ENCODE measurements at regions of chr15 and their contacts with region 1.

Region 1: DNA sequence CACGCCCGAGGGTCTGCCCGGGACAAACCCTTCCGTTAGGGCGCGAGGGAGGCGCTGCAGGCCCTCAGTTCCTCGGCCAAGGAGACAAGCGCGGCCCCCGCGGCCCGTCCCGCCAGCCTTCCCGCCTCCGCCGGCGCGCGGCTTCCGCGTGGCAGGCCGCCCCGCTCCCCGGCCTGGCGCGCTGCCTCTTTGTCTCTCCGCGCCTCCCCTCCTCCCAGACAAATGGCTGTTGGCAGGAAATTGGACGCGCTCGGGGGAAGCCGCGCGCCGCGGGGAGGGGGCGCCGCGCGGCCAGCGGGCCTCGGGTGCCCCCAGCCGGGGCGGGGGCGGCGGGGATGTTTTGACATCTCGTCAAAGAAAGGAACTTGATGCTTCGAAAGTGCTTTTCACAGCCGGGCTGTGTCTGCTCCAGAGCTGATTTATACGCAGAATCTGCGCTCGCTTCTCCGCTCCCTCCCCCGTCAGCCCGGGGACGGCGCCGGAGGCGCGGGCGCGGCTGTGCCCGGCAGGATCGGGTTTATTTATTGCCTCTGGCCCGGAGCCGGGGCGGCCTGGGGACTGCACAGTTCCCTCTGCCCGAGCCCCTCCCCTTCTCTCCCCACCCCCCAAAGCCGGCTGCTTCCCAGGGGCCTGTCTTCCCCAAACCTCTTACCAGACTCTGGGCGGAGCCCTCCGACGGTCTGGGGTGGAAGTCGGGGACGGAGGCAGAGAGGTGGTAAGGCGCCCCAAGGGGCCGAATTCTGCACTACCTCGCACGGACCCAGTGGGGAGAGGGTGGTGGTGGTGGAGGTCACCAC is 20.7 kb downstream of the SHF start:
- DNase-seq: peak; percentile 58 to 82 (median 78)
- ATAC-seq: peak; percentile 95
- H3K4me3 ChIP-seq: peak overlapping the region; percentile 70
- H3K4me3 Mint-ChIP-seq: peak overlapping the region; percentile 62 to 86 (median 74)
- H3K27ac ChIP-seq: peak overlapping the region; percentile 95
- H3K27ac Mint-ChIP-seq: peak overlapping the region; percentile 62 to 92 (median 83)
- H3K4me1 ChIP-seq: peaks cover 10 to 13% of the 10 kb centered on the region in 2 donors
- H3K4me1 Mint-ChIP-seq: peaks cover 0 to 31% (median 18%) of the 10 kb centered on the region in 7 donors
- H3K27me3 ChIP-seq: no peaks in the 10 kb centered on the region
- H3K27me3 Mint-ChIP-seq: no peaks in the 10 kb centered on the region

Region 2: DNA sequence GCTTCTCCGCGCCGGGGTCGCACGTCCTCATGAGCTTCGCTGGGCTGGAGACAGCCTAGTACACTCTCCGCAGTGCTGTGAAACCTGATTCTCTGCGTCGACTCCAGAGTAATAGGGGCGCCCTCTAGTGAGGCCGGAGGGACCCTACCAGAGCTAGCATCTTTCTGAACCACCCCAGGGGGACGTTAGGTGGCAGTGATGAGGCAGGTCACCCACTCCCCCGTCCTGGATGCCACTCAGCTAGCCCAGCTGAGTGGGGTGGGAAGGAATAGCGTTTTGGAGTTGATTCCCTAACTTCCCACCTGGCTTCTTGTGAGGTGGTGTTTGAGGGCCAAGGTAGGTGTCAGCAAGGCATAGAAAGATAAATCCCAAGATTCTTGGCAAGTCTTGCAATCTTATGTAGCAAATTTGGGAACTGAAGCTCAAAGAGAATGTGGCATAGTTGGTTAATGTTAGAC is 48.9 kb before region 1 on chr15:
- CTCF ChIA-PET with region 1: interaction called, 6 read pairs
- POLR2A ChIA-PET with region 1: interaction called, 3 read pairs
- intact Hi-C with region 1: loop called in 1 of 2 experiments (anchors 1 kb)
- DNase-seq: peak; percentile 64 to 86 (median 81)
- ATAC-seq: peak; percentile 99
- H3K4me3 ChIP-seq: peak overlapping the region; percentile 34
- H3K4me3 Mint-ChIP-seq: peak overlapping the region; percentile 69 to 91 (median 82)
- H3K27ac ChIP-seq: no peak overlapping the region
- H3K27ac Mint-ChIP-seq: peak overlapping the region in 1 of 9 donors; percentile 47
- H3K4me1 ChIP-seq: peaks cover 0 to 35% of the 10 kb centered on the region in 2 donors
- H3K4me1 Mint-ChIP-seq: peaks cover 19 to 42% (median 33%) of the 10 kb centered on the region in 7 donors
- H3K27me3 ChIP-seq: peaks cover 4 to 27% of the 10 kb centered on the region in 2 donors
- H3K27me3 Mint-ChIP-seq: peaks cover 50 to 82% (median 65%) of the 10 kb centered on the region in 5 donors

Region 3: GRCh38 chr15:45179221-45179985 is 12.4 kb after region 1 on chr15:
- CTCF ChIA-PET with region 1: interaction called, 15 read pairs
- POLR2A ChIA-PET with region 1: interaction called, 11 read pairs
- intact Hi-C with region 1: no loop called
- DNase-seq: peak in 6 of 9 donors; percentile 41 to 57 (median 50)
- ATAC-seq: no peak
- H3K4me3 ChIP-seq: no peak overlapping the region
- H3K4me3 Mint-ChIP-seq: no peak overlapping the region
- H3K27ac ChIP-seq: no peak overlapping the region
- H3K27ac Mint-ChIP-seq: peak overlapping the region in 1 of 9 donors; percentile 69
- H3K4me1 ChIP-seq: peaks cover 0 to 8% of the 10 kb centered on the region in 2 donors
- H3K4me1 Mint-ChIP-seq: peaks cover 0 to 18% (median 10%) of the 10 kb centered on the region in 7 donors
- H3K27me3 ChIP-seq: no peaks in the 10 kb centered on the region
- H3K27me3 Mint-ChIP-seq: no peaks in the 10 kb centered on the region

Region 4: DNA sequence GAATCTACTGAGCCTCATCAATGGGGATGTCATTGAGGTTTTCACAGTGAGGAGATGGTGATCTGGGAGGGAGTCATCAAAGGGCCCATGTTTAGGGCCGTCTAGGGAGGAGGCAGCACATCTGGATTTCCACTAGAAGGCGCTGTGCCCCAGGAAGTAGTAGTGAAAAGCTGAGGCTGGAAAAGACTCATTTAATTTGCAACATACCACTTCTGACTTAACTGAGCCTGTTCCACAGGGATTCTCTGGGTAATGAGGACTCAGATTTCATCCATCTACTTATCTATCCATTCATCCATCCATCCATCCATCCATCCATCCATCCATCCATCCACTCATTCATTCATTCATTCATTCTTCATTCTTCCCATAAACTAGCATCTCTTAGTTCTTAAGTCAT is 38.2 kb after region 1 on chr15:
- CTCF ChIA-PET with region 1: interaction called, 15 read pairs
- POLR2A ChIA-PET with region 1: interaction called, 77 read pairs
- intact Hi-C with region 1: loop called in 1 of 2 experiments (anchors 1 kb)
- DNase-seq: peak in 8 of 9 donors; percentile 31 to 61 (median 46)
- ATAC-seq: peak; percentile 27
- H3K4me3 ChIP-seq: no peak overlapping the region
- H3K4me3 Mint-ChIP-seq: no peak overlapping the region
- H3K27ac ChIP-seq: no peak overlapping the region
- H3K27ac Mint-ChIP-seq: peak overlapping the region in 3 of 9 donors; percentile 12 to 28 (median 19)
- H3K4me1 ChIP-seq: peaks cover 5% of the 10 kb centered on the region in 2 donors
- H3K4me1 Mint-ChIP-seq: peaks cover 0 to 8% (median 4%) of the 10 kb centered on the region in 7 donors
- H3K27me3 ChIP-seq: no peaks in the 10 kb centered on the region
- H3K27me3 Mint-ChIP-seq: peaks cover 9 to 35% (median 10%) of the 10 kb centered on the region in 5 donors

Region 5: GRCh38 chr15:45279024-45279698 is 112.1 kb after region 1 on chr15:
- CTCF ChIA-PET with region 1: interaction called, 5 read pairs
- POLR2A ChIA-PET with region 1: interaction called, 3 read pairs
- intact Hi-C with region 1: loop called (anchors 1 to 2 kb)
- DNase-seq: peak; percentile 93 to 99 (median 98)
- ATAC-seq: peak; percentile 100
- H3K4me3 ChIP-seq: peak overlapping the region; percentile 90
- H3K4me3 Mint-ChIP-seq: peak overlapping the region; percentile 90 to 99 (median 95)
- H3K27ac ChIP-seq: peak overlapping the region; percentile 84
- H3K27ac Mint-ChIP-seq: peak overlapping the region; percentile 84 to 99 (median 93)
- H3K4me1 ChIP-seq: peaks cover 9 to 12% of the 10 kb centered on the region in 2 donors
- H3K4me1 Mint-ChIP-seq: peaks cover 10 to 34% (median 23%) of the 10 kb centered on the region in 7 donors
- H3K27me3 ChIP-seq: no peaks in the 10 kb centered on the region
- H3K27me3 Mint-ChIP-seq: peaks cover 0 to 1% (median 0%) of the 10 kb centered on the region in 5 donors

Region 6: DNA sequence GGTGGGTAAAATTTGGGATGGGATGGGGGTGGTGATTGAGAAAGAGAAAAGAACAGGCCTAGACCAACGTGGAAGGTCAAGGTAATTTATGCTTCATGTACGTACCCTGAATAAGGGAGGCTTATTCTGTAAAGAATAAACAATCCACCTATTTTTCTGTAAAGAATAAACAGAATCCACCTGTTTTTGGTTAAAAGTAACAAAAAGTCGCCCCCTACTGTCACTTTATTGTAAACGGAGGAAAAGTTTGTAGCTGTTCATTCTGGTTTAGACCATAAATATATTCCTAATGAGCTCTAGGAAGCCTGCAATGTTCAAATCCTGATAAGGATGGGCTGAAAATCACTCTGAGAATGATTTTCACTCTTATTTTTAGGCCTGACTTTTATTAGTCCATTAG is 444.3 kb after region 1 on chr15:
- CTCF ChIA-PET with region 1: interaction called, 4 read pairs
- POLR2A ChIA-PET with region 1: no interaction called
- intact Hi-C with region 1: loop called in 1 of 2 experiments (anchors 1 kb)
- DNase-seq: peak in 2 of 9 donors; percentile 9 to 11
- ATAC-seq: no peak
- H3K4me3 ChIP-seq: no peak overlapping the region
- H3K4me3 Mint-ChIP-seq: no peak overlapping the region
- H3K27ac ChIP-seq: no peak overlapping the region
- H3K27ac Mint-ChIP-seq: peak overlapping the region in 2 of 9 donors; percentile 5 to 7
- H3K4me1 ChIP-seq: no peaks in the 10 kb centered on the region
- H3K4me1 Mint-ChIP-seq: peaks cover 0 to 15% (median 0%) of the 10 kb centered on the region in 7 donors
- H3K27me3 ChIP-seq: no peaks in the 10 kb centered on the region
- H3K27me3 Mint-ChIP-seq: no peaks in the 10 kb centered on the region